ENCODE measurements at regions of chr22 and their contacts with region 1.

Region 1: DNA sequence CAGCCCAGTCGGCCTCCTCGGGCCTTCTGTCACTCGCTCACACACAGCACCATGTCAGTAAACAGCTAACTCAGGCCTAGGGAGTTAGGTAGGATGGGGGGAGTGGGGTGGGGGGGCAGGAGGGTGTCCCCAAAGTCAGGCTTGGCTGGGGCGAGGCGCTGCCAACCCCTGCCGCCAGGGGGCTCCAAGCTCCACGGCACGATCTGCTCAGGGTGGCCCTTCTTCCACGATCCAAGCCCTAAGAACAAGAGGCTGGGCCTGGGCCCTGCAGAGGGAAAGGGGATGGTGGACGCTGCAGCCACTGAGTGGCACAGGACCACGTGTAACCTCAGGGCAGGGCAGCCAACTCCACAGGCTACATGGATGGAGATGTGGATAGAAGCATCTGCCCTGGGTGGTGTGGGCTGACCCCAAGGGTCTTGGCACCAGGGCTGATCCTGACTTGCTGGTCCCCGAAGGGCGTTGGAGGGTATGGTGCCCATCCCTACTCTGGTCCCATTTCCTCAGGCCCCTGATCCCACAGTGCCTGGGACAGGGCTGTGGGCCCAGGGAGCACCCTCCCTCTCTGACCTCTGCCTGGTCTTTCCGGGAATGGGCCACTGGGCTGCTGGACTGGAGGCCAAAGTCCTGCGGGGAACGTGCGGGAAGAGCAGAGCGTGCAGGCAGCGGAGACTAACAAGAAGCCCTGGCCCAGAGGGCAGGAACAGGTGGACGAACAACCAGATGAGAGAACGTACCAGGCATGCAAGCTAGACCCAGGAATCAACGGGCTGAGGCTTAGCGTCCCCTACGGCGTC is 29.1 kb upstream of the TXNRD2 start:
- DNase-seq: peak; percentile 81
- H3K4me3 Mint-ChIP-seq: no peak overlapping the region
- H3K27ac Mint-ChIP-seq: no peak overlapping the region
- H3K4me1 Mint-ChIP-seq: peaks cover 19% of the 10 kb centered on the region
- H3K27me3 Mint-ChIP-seq: no peaks in the 10 kb centered on the region
- CTCF ChIP-seq: peak; percentile 98

Region 2: GRCh38 chr22:20013382-20013871 is 42.8 kb after region 1 on chr22:
- CTCF ChIA-PET with region 1: interaction called, 15 read pairs
- intact Hi-C with region 1: loop called (anchors 5 kb)
- DNase-seq: peak; percentile 73
- H3K4me3 Mint-ChIP-seq: no peak overlapping the region
- H3K27ac Mint-ChIP-seq: no peak overlapping the region
- H3K4me1 Mint-ChIP-seq: peaks cover 7% of the 10 kb centered on the region
- H3K27me3 Mint-ChIP-seq: no peaks in the 10 kb centered on the region
- CTCF ChIP-seq: peak; percentile 67

Region 3: GRCh38 chr22:20027966-20028854 is 57.5 kb after region 1 on chr22:
- CTCF ChIA-PET with region 1: interaction called, 3 read pairs
- intact Hi-C with region 1: loop called (anchors 2 kb)
- DNase-seq: peak; percentile 30
- H3K4me3 Mint-ChIP-seq: no peak overlapping the region
- H3K27ac Mint-ChIP-seq: no peak overlapping the region
- H3K4me1 Mint-ChIP-seq: no peaks in the 10 kb centered on the region
- H3K27me3 Mint-ChIP-seq: no peaks in the 10 kb centered on the region
- CTCF ChIP-seq: peak; percentile 25

Region 4: DNA sequence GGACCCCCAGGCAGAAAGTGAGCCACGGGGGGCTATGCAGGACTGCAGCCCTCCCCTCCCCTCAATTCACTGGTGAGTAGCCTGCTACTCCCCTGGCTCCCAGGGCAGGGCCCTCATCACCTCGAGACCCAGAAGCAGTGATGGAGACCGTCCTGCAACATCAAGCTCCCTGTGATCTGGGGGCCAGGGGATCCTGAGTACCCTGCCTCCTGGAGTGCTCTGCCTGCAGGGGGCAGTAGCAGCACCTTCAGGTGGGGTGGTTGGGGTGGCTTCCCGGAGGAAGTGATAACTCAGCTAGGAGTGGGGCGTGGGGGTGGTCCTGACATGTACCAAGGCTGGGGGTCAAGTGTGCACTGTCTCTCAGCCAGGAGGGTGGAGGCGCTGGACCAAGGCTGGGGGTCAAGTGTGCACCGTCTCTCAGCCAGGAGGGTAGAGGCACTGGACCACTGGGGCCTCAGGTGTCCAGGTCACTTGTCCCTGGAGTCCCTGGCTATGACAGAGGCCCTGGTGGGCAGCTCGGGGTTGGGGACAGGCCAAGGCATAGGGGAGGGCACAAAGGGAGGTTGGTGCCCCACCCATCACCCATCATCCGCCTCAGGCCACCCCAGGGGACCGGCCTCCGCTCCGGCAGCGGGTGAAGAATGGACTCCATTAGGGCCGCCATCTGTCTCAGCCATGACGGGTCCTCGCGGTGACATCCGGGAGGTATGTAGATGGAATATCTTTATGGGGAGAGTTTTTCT is 288.1 kb after region 1 on chr22:
- CTCF ChIA-PET with region 1: no interaction called
- intact Hi-C with region 1: no loop called
- DNase-seq: no peak
- H3K4me3 Mint-ChIP-seq: no peak overlapping the region
- H3K27ac Mint-ChIP-seq: no peak overlapping the region
- H3K4me1 Mint-ChIP-seq: no peaks in the 10 kb centered on the region
- H3K27me3 Mint-ChIP-seq: no peaks in the 10 kb centered on the region
- CTCF ChIP-seq: peak; percentile 47

Measured in Calu3 (cell line).